Posterior vena cava (tissue), 2 donors: ENCODE measurements at regions of chr15 and their contacts with region 1.

Region 1: DNA sequence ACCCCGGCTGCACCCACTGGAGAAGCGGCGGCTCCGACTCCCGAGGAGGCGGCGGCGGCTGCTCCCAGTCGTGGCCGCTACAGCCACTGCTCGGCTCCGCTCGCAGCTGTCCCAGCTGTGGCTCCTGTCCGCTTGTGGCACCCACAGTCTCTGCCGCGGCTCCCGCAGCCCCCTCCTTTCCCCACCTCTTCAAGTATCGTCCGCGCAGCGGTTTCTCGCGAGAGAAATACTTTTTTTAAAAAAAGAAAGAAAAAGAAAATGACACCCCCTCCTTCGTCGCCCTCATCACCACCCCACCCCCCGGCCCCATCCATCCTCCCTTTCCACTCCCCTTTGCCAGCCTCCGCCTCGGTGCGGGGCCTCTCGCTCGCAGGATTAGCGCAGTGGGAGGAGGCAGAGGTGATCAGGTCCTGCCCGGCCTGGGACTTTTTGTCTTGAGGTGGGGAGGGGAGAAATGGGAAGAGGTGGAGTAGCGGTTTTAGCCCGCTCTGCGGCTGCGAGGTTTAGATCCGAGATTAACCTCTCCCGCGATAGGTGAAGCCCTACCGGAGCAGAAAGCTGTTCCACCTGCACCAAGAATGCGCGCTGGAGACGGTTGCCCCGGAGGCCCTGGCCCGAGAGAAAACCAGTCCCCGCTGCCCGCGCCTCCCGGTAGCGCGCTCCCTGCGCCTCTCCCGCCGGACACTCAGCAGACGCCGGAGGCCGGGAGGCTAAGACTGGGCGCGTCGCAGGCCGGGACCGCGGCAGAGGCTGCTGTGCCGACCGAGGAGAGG is at the start of gene FBN1:
- DNase-seq: peak; percentile 95
- total RNA-seq, gene FBN1: 194 to 541 TPM

Region 2: DNA sequence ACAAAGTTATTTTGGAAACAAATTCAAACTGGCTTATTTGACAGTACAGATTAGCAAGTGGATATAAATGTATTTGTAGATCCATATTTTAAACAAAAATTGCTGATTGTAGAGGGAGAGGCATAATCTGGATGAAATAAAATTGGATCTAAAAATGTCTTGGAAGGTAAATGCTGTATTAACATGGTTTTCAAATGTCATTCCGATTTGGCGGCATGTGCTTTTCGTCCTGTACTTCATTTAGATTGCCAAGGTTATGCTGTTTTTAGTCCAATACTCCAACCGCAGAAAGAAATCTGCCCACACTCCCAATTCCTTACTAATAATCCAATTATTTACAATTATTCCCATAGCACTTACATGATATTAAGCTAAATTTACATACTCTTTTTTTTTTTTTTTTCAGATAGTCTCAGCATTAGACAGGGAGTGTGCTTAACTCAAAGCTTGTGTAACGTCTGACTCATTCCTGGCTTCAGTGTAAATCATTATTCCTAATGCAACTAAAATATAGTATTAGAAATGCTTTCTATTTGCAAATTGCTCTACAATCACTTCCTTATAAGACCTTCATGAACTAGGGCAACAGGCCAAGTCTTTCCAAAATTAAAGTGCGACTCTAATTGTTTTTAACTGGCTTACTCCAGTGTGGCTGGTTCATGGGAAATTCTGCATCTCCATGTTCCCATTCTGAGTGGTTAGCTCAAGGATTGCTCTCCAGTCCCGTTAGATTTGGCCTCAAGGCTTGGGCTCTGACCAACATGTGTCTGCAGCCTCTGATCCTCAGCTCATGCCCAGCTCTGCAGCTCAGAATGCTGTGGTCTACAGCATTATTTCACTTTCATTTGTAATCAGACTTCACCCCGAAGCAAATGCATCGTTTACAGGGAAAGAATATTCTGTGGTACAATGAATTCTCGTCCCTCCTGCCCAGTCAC is 104.1 kb before region 1 on chr15:
- intact Hi-C with region 1: loop called in 1 of 2 experiments (anchors 10 kb)
- DNase-seq: no peak

Region 3: GRCh38 chr15:48710952-48711495 is 65.3 kb after region 1 on chr15:
- intact Hi-C with region 1: no loop called
- DNase-seq: no peak

Region 4: DNA sequence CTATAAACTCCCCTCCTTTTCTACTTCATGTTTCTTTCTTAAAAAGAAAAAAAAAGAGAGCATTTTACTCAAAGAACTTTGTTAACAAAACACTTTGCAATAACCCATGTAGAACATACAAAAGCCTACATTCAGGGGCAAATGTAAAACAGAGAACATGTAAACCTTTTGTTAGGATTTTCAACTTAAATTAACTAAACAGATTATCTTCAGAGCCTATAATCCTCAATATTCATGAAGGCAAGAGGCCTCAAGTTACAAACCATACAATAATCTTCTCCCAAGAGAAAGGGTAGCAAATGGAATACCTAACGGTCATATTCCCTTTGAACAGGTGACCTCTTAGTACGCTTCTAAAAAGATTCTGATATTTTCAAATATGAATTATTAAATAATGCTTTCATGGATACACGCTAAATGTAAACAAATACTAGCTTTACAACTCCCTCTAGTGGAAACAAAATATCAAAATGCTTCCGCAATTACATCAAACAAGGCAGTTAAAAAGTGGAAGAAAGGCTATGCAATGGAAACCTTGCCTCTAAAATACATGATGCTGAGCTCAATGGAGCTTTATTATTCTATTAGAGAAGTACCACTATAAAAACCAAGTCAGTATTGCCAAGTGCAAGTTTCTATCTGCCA is 155.2 kb after region 1 on chr15:
- intact Hi-C with region 1: loop called (anchors 5 to 10 kb)
- DNase-seq: no peak